ENCODE measurements at regions of chr9 and their contacts with region 1.

Region 1: DNA sequence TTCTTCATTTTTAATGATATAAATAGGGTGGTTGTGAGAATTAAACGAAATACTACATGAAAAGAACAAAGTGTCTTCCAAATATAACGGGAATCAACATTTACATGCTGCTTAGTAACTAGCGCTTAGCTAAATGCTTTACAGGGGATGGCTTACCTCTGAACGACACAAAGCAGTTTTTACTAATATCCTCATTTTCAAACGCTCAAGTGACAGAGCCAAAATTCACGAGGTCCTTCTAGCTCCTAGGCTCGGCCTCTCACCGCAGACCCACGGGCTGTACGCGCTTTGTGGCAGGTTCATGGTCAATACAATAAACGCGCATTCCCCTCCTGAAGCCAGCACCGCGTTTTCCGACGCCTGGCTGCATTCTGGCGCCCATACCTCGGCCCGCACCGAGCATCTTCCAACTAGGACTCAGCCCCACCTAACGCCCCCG is 442 bp downstream of the ZNF510 start:
- DNase-seq: no peak
- ATAC-seq: no peak
- H3K4me3 ChIP-seq: peak overlapping the region; percentile 54 to 70
- H3K4me3 Mint-ChIP-seq: peak overlapping the region; percentile 97
- H3K27ac ChIP-seq: peak overlapping the region; percentile 76 to 77
- H3K27ac Mint-ChIP-seq: peak overlapping the region; percentile 99
- H3K4me1 ChIP-seq: peaks cover 14% of the 10 kb centered on the region
- H3K4me1 Mint-ChIP-seq: peaks cover 52% of the 10 kb centered on the region
- H3K27me3 ChIP-seq: no peaks in the 10 kb centered on the region
- H3K27me3 Mint-ChIP-seq: no peaks in the 10 kb centered on the region
- CTCF ChIP-seq: no peak

Region 2: GRCh38 chr9:96514108-96514799 is 263.2 kb before region 1 on chr9:
- CTCF ChIA-PET with region 1: no interaction called
- POLR2A ChIA-PET with region 1: no interaction called
- intact Hi-C with region 1: no loop called
- DNase-seq: no peak
- ATAC-seq: no peak
- H3K4me3 ChIP-seq: no peak overlapping the region
- H3K4me3 Mint-ChIP-seq: no peak overlapping the region
- H3K27ac ChIP-seq: no peak overlapping the region
- H3K27ac Mint-ChIP-seq: no peak overlapping the region
- H3K4me1 ChIP-seq: no peaks in the 10 kb centered on the region
- H3K4me1 Mint-ChIP-seq: peaks cover 2% of the 10 kb centered on the region
- H3K27me3 ChIP-seq: no peaks in the 10 kb centered on the region
- H3K27me3 Mint-ChIP-seq: no peaks in the 10 kb centered on the region
- CTCF ChIP-seq: no peak

Region 3: GRCh38 chr9:96686548-96687335 is 90.7 kb before region 1 on chr9:
- CTCF ChIA-PET with region 1: no interaction called
- POLR2A ChIA-PET with region 1: no interaction called
- intact Hi-C with region 1: loop called (anchors 1 to 5 kb)
- DNase-seq: peak; percentile 47 to 91 (median 81)
- ATAC-seq: peak; percentile 96
- H3K4me3 ChIP-seq: peak overlapping the region; percentile 50 to 81
- H3K4me3 Mint-ChIP-seq: peak overlapping the region; percentile 87
- H3K27ac ChIP-seq: peak overlapping the region; percentile 35 to 53
- H3K27ac Mint-ChIP-seq: peak overlapping the region; percentile 89
- H3K4me1 ChIP-seq: no peaks in the 10 kb centered on the region
- H3K4me1 Mint-ChIP-seq: peaks cover 11% of the 10 kb centered on the region
- H3K27me3 ChIP-seq: no peaks in the 10 kb centered on the region
- H3K27me3 Mint-ChIP-seq: peaks cover 5% of the 10 kb centered on the region
- CTCF ChIP-seq: peak; percentile 28

Region 4: GRCh38 chr9:96738147-96739027 is 39.1 kb before region 1 on chr9:
- CTCF ChIA-PET with region 1: no interaction called
- POLR2A ChIA-PET with region 1: no interaction called
- intact Hi-C with region 1: no loop called
- DNase-seq: no peak
- ATAC-seq: no peak
- H3K4me3 ChIP-seq: no peak overlapping the region
- H3K4me3 Mint-ChIP-seq: no peak overlapping the region
- H3K27ac ChIP-seq: no peak overlapping the region
- H3K27ac Mint-ChIP-seq: no peak overlapping the region
- H3K4me1 ChIP-seq: no peaks in the 10 kb centered on the region
- H3K4me1 Mint-ChIP-seq: no peaks in the 10 kb centered on the region
- H3K27me3 ChIP-seq: no peaks in the 10 kb centered on the region
- H3K27me3 Mint-ChIP-seq: peaks cover 2% of the 10 kb centered on the region
- CTCF ChIP-seq: no peak

Region 5: DNA sequence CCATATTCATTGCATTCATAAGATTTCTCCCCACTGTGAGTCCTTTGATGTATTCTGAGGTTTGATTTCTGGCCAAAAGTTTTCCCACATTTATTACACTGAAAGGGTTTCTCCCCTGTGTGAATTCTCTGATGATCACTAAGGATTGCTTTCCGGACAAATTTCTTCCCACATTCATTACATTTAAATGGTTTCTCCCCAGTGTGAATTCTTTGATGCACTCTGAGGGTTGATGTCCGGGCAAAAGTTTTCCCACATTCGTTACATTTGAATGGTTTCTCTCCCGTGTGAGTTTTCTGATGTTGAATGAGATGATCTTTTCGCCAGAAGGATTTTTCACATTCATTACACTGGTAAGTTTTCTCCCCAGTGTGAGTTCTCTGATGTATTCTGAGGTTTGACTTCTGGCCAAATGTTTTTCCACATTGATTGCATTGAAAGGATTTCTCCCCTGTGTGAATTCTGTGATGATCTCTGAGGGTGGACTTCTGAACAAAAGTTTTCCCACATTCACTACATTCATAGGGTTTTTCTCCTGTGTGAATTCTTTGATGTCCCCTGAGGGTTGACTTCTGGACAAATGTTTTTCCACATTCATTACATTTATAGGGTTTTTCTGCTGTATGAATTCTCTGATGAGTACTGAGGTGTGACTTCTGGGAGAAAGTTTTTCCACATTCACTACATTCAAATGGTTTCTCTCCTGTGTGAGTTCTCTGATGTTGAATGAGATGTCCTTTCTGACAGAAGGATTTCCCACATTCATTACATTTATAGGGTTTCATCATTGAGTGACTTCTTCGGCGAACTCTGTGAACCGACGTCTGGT is 18.4 kb before region 1 on chr9:
- CTCF ChIA-PET with region 1: no interaction called
- POLR2A ChIA-PET with region 1: interaction called, 3 read pairs
- intact Hi-C with region 1: loop called in 1 of 2 experiments (anchors 2 kb)
- DNase-seq: no peak
- ATAC-seq: no peak
- H3K4me3 ChIP-seq: no peak overlapping the region
- H3K4me3 Mint-ChIP-seq: no peak overlapping the region
- H3K27ac ChIP-seq: no peak overlapping the region
- H3K27ac Mint-ChIP-seq: no peak overlapping the region
- H3K4me1 ChIP-seq: no peaks in the 10 kb centered on the region
- H3K4me1 Mint-ChIP-seq: no peaks in the 10 kb centered on the region
- H3K27me3 ChIP-seq: no peaks in the 10 kb centered on the region
- H3K27me3 Mint-ChIP-seq: no peaks in the 10 kb centered on the region
- CTCF ChIP-seq: no peak

Region 6: GRCh38 chr9:97237951-97238851 is 460.8 kb after region 1 on chr9:
- CTCF ChIA-PET with region 1: no interaction called
- POLR2A ChIA-PET with region 1: interaction called, 4 read pairs
- intact Hi-C with region 1: loop called (anchors 5 to 10 kb)
- DNase-seq: peak; percentile 48 to 89 (median 77)
- ATAC-seq: peak; percentile 91
- H3K4me3 ChIP-seq: peak overlapping the region; percentile 59 to 89
- H3K4me3 Mint-ChIP-seq: peak overlapping the region; percentile 93
- H3K27ac ChIP-seq: peak overlapping the region; percentile 45 to 51
- H3K27ac Mint-ChIP-seq: peak overlapping the region; percentile 95
- H3K4me1 ChIP-seq: peaks cover 14% of the 10 kb centered on the region
- H3K4me1 Mint-ChIP-seq: peaks cover 32% of the 10 kb centered on the region
- H3K27me3 ChIP-seq: no peaks in the 10 kb centered on the region
- H3K27me3 Mint-ChIP-seq: no peaks in the 10 kb centered on the region
- CTCF ChIP-seq: no peak

Measured in CD8-positive, alpha-beta T cell (primary cell).